Activated CD4-positive, alpha-beta memory T cell treated with anti-CD3 and anti-CD28 coated beads, Interleukin-2, amount 10 ng/mL, durations not matched to agents 7 days and 5 days (primary cell): ENCODE measurements at regions of chr3 and their contacts with region 1.

Region 1: GRCh38 chr3:48439820-48440589 is at the starts of genes CCDC51 and TMA7:
- DNase-seq: peak; percentile 99
- H3K4me3 Mint-ChIP-seq: peak within 1 kb of the TSS; percentile 89
- H3K27ac Mint-ChIP-seq: peak within 1 kb of the TSS; percentile 93
- H3K4me1 Mint-ChIP-seq: peaks cover 43% of the 10 kb centered on the region
- H3K27me3 Mint-ChIP-seq: no peaks in the 10 kb centered on the region
- total RNA-seq, gene CCDC51: 14.9 to 17.5 TPM
- total RNA-seq, gene TMA7: 240 to 241 TPM

Region 2: GRCh38 chr3:48240711-48241491 is 199.1 kb before region 1 on chr3 and contains the start of gene ZNF589:
- CTCF ChIA-PET with region 1: interaction called, 20 read pairs
- POLR2A ChIA-PET with region 1: interaction called, 7 read pairs
- DNase-seq: peak; percentile 96
- H3K4me3 Mint-ChIP-seq: peak within 1 kb of the TSS; percentile 84
- H3K27ac Mint-ChIP-seq: peak within 1 kb of the TSS; percentile 90
- H3K4me1 Mint-ChIP-seq: peaks cover 36% of the 10 kb centered on the region
- H3K27me3 Mint-ChIP-seq: no peaks in the 10 kb centered on the region
- total RNA-seq, gene ZNF589: 38.1 to 38.6 TPM

Region 3: GRCh38 chr3:48301020-48301796 is 138.8 kb before region 1 on chr3:
- CTCF ChIA-PET with region 1: interaction called, 13 read pairs
- POLR2A ChIA-PET with region 1: interaction called, 3 read pairs
- DNase-seq: peak; percentile 92
- H3K4me3 Mint-ChIP-seq: peak within 1 kb of the TSS; percentile 94
- H3K27ac Mint-ChIP-seq: peak within 1 kb of the TSS; percentile 97
- H3K4me1 Mint-ChIP-seq: peaks cover 37% of the 10 kb centered on the region
- H3K27me3 Mint-ChIP-seq: peaks cover 2% of the 10 kb centered on the region

Region 4: GRCh38 chr3:48429317-48429959 is 10.6 kb before region 1 on chr3:
- CTCF ChIA-PET with region 1: interaction called, 113 read pairs
- POLR2A ChIA-PET with region 1: interaction called, 11 read pairs
- DNase-seq: peak; percentile 54
- H3K4me3 Mint-ChIP-seq: peak overlapping the region; percentile 63
- H3K27ac Mint-ChIP-seq: no peak overlapping the region
- H3K4me1 Mint-ChIP-seq: peaks cover 21% of the 10 kb centered on the region
- H3K27me3 Mint-ChIP-seq: peaks cover 18% of the 10 kb centered on the region

Region 5: GRCh38 chr3:48478596-48479555 is 38.9 kb after region 1 on chr3:
- CTCF ChIA-PET with region 1: interaction called, 40 read pairs
- POLR2A ChIA-PET with region 1: interaction called, 69 read pairs
- DNase-seq: peak; percentile 75
- H3K4me3 Mint-ChIP-seq: peak overlapping the region; percentile 86
- H3K27ac Mint-ChIP-seq: peak overlapping the region; percentile 98
- H3K4me1 Mint-ChIP-seq: peaks cover 51% of the 10 kb centered on the region
- H3K27me3 Mint-ChIP-seq: no peaks in the 10 kb centered on the region

Region 6: DNA sequence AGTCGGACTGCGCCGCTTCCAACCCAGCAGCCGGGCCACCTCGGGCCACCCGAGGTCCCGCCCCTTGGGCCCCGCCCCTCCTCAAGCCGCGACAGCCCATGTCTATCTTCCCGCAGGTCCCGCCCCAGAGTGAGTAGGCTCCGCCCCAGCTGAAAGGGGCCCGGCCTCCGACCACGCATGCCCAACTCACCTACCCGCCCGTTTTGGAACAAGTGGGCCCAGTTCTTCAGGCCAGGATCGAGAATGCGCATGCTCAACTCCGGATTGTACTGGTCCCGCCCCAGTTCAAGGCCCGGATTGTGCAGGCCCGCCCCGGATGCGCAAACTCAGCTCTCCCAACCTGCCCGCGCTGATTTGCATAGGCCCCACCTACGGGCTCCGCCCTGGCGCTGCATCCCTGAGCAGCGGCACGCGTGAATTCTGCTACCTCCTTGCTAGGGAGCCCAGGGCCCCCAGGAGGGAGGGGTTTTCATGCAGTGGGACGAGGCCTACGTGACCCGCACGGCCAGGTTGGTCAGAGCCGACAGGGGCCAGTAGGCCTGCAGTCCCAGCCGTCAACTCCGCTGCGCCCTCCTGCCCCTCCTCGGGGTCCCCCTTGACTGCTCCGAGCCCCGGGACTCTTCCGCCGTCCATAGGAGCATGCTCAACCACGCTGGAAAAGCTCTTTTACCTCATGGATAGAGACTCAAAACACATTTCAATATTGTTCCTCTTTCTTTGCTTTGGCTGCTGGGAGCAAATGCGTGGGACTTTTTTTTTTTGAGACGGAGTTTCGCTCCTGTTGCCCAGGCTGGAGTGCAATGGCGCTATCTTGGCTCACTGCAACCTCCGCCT is 117.0 kb after region 1 on chr3 and contains the start of gene PFKFB4:
- CTCF ChIA-PET with region 1: interaction called, 180 read pairs
- POLR2A ChIA-PET with region 1: interaction called, 18 read pairs
- DNase-seq: peak; percentile 100
- H3K4me3 Mint-ChIP-seq: peak within 1 kb of the TSS; percentile 79
- H3K27ac Mint-ChIP-seq: peak within 1 kb of the TSS; percentile 74
- H3K4me1 Mint-ChIP-seq: peaks cover 49% of the 10 kb centered on the region
- H3K27me3 Mint-ChIP-seq: no peaks in the 10 kb centered on the region
- total RNA-seq, gene PFKFB4: 33.3 to 34.4 TPM

Region 7: DNA sequence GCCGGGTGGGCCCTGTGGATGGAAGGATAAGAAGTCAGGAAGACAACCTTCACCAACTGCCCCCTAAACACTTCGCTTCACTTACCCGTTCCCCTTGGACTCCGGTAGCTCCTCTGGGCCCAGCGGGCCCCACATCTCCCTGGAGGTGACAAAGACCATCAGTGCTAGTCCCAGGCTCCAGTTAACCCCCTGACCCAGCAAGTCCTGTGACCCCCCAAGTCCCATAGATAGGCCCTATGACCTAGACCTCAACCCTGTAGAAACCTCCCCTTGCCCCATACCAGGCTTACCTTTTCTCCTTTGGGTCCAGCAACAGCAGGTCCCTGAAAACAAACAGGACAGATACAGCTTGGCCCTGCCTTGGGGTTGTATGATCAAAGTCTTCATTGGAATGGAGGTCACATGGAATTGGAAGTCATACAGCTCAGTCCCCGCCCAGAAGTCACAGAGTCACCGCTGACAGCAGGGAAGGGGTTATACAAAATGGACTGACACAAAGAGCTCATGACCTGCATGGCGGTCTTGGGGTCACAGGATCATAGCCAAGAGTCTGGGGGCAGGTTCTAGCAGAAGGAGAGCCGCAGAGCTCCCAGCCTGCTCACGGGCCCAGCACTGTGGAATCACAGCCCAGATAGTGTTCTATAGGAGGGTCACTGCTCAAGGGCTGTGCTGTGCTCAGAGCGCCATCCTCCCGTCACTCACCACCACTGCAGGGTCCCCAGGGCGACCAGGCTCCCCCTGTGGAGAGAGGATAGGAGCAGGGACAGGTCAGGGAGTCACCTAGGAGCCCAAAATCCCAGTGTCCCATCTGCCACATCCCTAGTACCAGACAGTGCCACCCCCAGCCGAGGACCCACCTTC is 141.8 kb after region 1 on chr3:
- CTCF ChIA-PET with region 1: no interaction called
- POLR2A ChIA-PET with region 1: no interaction called
- DNase-seq: no peak
- H3K4me3 Mint-ChIP-seq: no peak overlapping the region
- H3K27ac Mint-ChIP-seq: no peak overlapping the region
- H3K4me1 Mint-ChIP-seq: no peaks in the 10 kb centered on the region
- H3K27me3 Mint-ChIP-seq: no peaks in the 10 kb centered on the region